Activated B cell treated with CpG ODN at 0.5 μM for 24 hours (primary cell): ENCODE measurements at regions of chr1 and their contacts with region 1.

Region 1: DNA sequence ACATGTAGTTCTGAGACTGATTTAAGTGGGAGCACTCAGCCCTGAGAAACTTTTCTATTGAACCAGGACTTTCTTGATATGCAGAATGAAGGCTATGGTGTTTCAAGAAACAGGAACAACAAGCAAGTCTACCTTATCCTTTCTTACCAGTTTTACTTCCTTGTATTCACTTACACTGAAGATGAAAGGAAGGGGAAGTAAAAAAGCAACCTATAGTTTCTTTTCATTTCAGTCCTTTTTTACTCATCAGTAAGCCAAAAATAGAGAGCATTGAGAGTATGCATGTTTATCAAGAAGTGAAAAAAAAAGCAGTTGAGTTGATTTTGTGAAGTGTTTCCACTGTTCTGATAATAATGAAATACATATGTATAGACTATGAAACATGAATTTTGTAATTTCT is 1010.3 kb downstream of the AMY1C start:
- DNase-seq: no peak
- ATAC-seq: peak; percentile 93
- H3K4me3 Mint-ChIP-seq: peak overlapping the region; percentile 22
- H3K27ac Mint-ChIP-seq: peak overlapping the region; percentile 63
- H3K4me1 Mint-ChIP-seq: peaks cover 31% of the 10 kb centered on the region
- H3K27me3 Mint-ChIP-seq: no peaks in the 10 kb centered on the region
- CTCF ChIP-seq: no peak

Region 2: DNA sequence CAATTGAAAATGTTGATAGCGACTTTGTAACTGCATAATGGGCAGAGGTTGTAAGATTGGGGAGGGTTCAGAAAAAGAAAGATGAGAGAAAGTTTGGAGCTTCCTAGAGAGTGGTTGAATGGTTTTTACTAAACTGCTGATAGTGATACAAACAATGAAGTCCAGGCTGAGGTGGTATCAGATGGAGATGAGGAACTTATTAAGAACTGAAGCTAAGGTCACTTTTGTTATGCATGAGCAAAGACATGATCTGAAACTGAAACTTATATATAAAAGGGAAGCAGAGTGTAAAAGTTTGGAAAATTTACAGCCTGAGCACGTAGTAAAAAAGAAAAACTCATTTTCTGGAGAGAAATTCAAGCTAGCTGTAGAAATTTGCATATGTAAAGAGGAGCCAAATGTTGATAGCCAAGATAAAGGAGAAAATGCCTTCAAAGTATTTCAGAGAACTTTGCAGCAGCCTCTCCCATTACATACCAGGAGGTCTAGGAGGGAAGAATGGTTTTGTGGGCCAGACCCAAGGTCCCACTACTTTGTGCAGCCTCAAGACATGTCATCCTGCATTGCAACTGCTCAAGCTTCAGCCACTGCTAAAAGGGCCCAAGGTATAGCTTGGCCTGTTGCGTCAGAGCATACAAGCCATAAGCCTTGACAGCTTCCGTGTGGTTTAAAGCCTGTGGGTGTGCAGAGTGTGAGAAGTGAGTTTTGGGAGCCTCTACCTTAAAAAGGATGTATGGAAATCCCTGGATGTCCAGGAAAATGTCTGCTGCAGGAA is 166.4 kb before region 1 on chr1:
- CTCF ChIA-PET with region 1: no interaction called
- POLR2A ChIA-PET with region 1: interaction called, 3 read pairs
- intact Hi-C with region 1: loop called (anchors 1 kb)
- DNase-seq: no peak
- ATAC-seq: peak; percentile 78
- H3K4me3 Mint-ChIP-seq: peak overlapping the region; percentile 32
- H3K27ac Mint-ChIP-seq: peak overlapping the region; percentile 91
- H3K4me1 Mint-ChIP-seq: peaks cover 26% of the 10 kb centered on the region
- H3K27me3 Mint-ChIP-seq: no peaks in the 10 kb centered on the region
- CTCF ChIP-seq: no peak

Region 3: DNA sequence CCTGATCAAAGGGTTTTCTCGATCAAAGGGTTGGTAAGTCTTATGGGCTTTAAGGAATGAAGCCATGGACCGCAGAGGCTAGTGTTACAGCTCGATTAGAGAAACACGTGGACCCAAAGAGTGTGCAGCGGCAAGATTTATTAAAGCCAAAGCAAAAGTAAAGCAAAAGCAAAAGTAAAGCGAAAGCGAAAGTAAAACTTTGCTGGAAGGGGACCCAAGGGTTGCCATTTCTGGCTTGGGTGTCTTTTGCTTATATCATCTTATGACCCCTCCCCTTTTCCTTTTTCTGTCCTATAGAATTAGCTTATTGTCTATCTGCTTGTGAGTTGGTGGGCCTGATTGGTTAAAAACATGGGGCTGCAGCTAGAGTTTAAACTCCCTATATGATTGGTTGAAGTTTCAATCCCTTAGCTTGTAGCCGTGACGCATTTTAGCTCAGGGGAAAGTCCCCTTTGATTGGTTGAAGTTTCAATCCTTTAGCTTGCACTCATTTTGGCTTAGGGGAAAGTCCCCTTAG is 53.3 kb before region 1 on chr1:
- CTCF ChIA-PET with region 1: no interaction called
- POLR2A ChIA-PET with region 1: no interaction called
- intact Hi-C with region 1: loop called (anchors 2 kb)
- DNase-seq: no peak
- ATAC-seq: peak; percentile 21
- H3K4me3 Mint-ChIP-seq: no peak overlapping the region
- H3K27ac Mint-ChIP-seq: no peak overlapping the region
- H3K4me1 Mint-ChIP-seq: peaks cover 9% of the 10 kb centered on the region
- H3K27me3 Mint-ChIP-seq: no peaks in the 10 kb centered on the region
- CTCF ChIP-seq: no peak

Region 4: GRCh38 chr1:104746994-104747393 is 13.0 kb before region 1 on chr1:
- CTCF ChIA-PET with region 1: no interaction called
- POLR2A ChIA-PET with region 1: no interaction called
- intact Hi-C with region 1: loop called (anchors 2 kb)
- DNase-seq: no peak
- ATAC-seq: no peak
- H3K4me3 Mint-ChIP-seq: no peak overlapping the region
- H3K27ac Mint-ChIP-seq: no peak overlapping the region
- H3K4me1 Mint-ChIP-seq: peaks cover 6% of the 10 kb centered on the region
- H3K27me3 Mint-ChIP-seq: no peaks in the 10 kb centered on the region
- CTCF ChIP-seq: no peak

Region 5: DNA sequence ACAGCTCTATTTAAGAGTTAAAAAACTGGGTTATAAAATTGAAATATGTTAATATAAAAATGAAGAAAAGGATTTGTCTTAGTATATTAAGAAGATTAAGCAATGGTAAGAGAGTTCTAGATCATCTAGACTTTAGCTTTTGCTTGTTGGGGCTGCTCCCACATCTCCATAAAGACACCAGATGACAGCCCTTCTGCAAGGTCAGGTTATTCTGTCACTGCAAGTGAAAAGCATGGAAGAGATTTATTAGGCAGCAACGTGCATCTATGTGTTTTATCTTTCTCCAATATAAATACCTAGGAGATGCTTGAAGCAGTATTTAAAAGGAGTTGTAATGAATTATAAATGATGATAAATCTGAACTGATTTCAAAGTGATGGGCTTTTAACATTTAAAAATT is 550.0 kb after region 1 on chr1:
- CTCF ChIA-PET with region 1: no interaction called
- POLR2A ChIA-PET with region 1: no interaction called
- intact Hi-C with region 1: no loop called
- DNase-seq: no peak
- ATAC-seq: no peak
- H3K4me3 Mint-ChIP-seq: no peak overlapping the region
- H3K27ac Mint-ChIP-seq: no peak overlapping the region
- H3K4me1 Mint-ChIP-seq: no peaks in the 10 kb centered on the region
- H3K27me3 Mint-ChIP-seq: no peaks in the 10 kb centered on the region
- CTCF ChIP-seq: no peak

Region 6: DNA sequence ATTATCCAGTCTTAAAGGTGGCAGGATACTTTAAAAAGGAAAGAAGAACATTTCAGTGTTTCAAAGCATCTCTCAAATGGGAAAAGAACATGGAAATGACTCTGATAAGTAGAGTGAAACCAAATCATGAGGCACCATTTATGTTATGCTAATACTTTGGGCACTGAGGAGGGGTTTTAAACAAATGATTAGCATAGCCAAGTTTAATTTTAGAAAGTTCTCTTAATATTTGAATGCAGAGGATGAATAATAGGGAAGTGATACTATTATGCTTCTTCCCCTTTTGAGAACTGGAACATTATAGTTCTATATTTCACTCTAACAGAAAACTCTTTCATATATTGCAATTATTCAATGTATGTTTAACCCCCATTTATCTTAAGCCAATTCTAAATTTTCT is 1114.6 kb after region 1 on chr1:
- CTCF ChIA-PET with region 1: no interaction called
- POLR2A ChIA-PET with region 1: no interaction called
- intact Hi-C with region 1: loop called (anchors 2 kb)
- DNase-seq: no peak
- ATAC-seq: peak; percentile 87
- H3K4me3 Mint-ChIP-seq: peak overlapping the region; percentile 58
- H3K27ac Mint-ChIP-seq: peak overlapping the region; percentile 88
- H3K4me1 Mint-ChIP-seq: peaks cover 36% of the 10 kb centered on the region
- H3K27me3 Mint-ChIP-seq: no peaks in the 10 kb centered on the region
- CTCF ChIP-seq: no peak